ENCODE measurements at regions of chr6 and their contacts with region 1.

Region 1: GRCh38 chr6:78538002-78538401 is 329.3 kb upstream of the IRAK1BP1 start:
- DNase-seq: no peak

Region 2: DNA sequence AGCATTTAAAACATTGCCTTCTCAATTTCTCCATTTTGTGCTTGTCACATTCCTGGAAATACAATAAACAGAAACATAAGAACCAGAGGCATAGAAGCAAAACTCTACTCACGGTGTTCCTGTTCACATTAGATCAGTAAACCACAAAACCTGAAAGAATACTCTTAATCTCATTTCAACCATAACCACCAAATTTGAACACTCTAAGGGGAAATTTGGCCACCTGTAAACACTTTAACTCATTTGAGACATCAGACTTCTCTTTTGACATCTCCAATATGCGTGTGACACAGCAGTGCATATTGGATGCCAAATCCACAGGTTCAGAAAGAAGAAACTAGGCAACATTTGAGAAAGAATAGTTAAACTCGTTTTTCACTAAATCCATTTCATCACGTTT is 175.6 kb after region 1 on chr6:
- intact Hi-C with region 1: loop called in 1 of 2 experiments (anchors 5 kb)
- DNase-seq: no peak